Esophagus squamous epithelium (tissue), 5 donors: ENCODE measurements at regions of chr11 and their contacts with region 1.

Region 1: DNA sequence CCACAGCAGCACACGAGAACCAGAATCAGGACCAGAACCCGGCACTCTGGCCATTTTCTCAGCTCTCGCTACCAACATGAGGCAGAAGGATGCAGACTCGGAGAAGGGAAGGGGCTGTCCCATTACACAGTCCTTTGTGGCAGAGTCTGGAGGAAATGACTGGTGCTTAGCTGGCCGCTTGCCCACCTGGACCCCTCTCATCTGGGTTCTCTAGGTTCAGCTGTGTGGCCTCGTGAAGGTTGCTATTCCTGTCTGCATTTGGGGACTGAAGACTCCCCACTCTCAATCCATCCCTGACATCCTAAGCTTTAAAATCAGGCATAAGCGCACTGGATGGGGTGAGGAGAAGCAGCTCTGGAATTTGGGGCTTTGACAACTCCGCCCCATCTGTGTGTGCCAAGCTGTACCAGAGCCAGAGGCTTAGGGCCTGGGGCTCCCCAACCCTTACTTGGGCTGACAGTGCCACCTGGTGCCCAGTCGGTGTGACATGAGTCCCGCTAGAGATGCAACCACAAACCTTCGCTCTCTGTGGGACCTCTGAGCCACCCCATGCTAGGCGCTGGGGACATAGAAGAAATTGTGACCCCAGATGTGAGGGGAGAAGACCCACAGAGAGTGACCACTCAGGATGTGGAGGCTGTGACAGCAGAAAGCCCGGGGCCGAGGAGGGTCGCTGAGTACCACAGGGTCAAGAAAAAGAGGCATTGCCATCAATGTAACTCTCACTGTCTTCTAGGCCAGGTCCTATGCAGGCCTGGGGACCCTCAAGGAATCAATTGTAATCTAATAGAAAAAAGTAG is 35.9 kb upstream of the FCHSD2 start:
- DNase-seq: peak; percentile 34
- H3K4me3 ChIP-seq: no peak overlapping the region
- H3K27ac ChIP-seq: peak overlapping the region in 3 of 4 donors; percentile 46 to 84 (median 78)
- H3K4me1 ChIP-seq: peaks cover 23 to 39% (median 26%) of the 10 kb centered on the region in 3 donors
- H3K27me3 ChIP-seq: no peaks in the 10 kb centered on the region
- CTCF ChIP-seq: peak; percentile 57 to 90 (median 84)
- POLR2A ChIP-seq: no peak

Region 2: DNA sequence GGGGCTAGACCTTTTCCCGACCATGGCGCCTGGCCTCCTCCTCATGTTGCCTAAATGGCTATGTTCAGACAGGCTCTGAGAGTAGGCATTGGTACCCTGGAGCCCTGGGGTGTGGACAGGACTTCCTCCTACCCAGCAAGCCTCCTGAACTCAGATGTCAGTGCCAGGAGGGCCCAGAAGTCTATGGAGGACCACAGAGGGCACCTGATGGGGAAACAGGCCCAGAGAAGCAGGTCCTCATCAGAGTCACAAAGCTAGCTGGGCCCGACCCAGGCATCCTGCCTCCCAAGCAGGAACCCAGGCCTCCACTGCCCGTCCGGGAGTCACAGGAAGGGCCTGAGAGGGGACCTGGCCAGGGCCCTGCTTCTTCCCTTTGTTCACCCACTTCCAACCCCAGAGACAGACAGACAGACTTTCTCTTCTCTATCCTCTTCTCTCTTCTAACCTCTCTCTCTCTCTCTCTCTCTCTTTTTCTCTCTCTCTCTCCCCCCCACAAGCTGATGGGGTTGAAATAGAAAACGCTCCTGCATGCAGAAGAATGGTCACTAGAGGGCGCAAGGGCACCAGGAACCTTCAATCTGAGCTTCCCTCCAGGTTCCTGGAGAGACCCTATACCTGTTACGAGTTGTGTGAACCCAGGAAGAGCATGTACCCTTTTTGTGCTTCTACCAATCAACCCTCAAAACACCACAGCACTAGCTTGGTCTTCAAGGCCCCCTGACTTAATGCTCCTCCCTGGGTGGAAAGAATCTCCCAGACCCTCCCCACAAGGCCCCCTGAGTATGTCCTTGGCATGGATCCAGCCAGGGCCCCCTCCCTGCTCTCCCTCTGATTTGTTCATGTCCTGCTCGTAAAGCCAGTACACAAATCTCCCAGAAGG is 452.9 kb before region 1 on chr11:
- intact Hi-C with region 1: loop called (anchors 5 kb)
- DNase-seq: no peak
- H3K4me3 ChIP-seq: no peak overlapping the region
- H3K27ac ChIP-seq: peak overlapping the region in 3 of 4 donors; percentile 3 to 92 (median 48)
- H3K4me1 ChIP-seq: peaks cover 22 to 57% (median 35%) of the 10 kb centered on the region in 3 donors
- H3K27me3 ChIP-seq: no peaks in the 10 kb centered on the region
- CTCF ChIP-seq: peak; percentile 85 to 95 (median 91)
- POLR2A ChIP-seq: no peak

Region 3: GRCh38 chr11:72831513-72832300 is 346.3 kb before region 1 on chr11:
- intact Hi-C with region 1: loop called (anchors 5 kb)
- DNase-seq: no peak
- H3K4me3 ChIP-seq: no peak overlapping the region
- H3K27ac ChIP-seq: peak overlapping the region in 2 of 4 donors; percentile 32 to 75
- H3K4me1 ChIP-seq: peaks cover 6 to 65% (median 31%) of the 10 kb centered on the region in 3 donors
- H3K27me3 ChIP-seq: no peaks in the 10 kb centered on the region
- CTCF ChIP-seq: peak; percentile 79 to 97 (median 93)
- POLR2A ChIP-seq: no peak

Region 4: DNA sequence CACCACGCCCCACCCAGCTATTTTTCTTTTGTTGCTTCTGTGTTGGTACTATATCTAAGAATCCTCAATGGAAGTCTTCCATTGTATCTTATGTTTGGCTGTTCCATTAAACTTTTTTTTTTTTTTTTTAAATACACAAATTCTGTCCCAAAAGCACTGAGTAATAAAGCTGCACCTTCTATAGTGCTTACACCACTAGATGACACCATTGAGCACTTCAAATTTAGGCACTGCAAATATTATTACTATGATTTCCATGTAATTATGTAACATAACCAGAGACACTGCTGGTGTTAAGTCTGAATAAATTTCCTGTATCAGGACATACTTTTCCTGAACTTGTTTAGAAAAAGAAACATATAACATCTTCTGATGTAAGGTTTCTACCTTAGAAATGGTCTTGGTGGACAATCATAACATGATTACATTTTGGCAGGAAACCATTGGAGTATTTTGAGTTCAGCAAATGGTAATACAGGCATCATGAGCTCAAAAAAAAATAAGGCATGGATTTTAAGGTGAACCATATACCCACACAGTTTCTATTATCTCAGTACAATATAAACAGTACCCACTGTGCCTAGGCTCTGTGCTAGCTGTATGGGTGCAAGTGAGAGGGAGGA is 253.3 kb before region 1 on chr11:
- intact Hi-C with region 1: loop called (anchors 10 kb)
- DNase-seq: no peak
- H3K4me3 ChIP-seq: no peak overlapping the region
- H3K27ac ChIP-seq: no peak overlapping the region
- H3K4me1 ChIP-seq: peaks cover 0 to 5% (median 0%) of the 10 kb centered on the region in 3 donors
- H3K27me3 ChIP-seq: no peaks in the 10 kb centered on the region
- CTCF ChIP-seq: peak in 5 of 6 experiments; percentile 36 to 63 (median 44)
- POLR2A ChIP-seq: no peak